H1 (cell line): ENCODE measurements at regions of chr2 and their contacts with region 1.

Region 1: DNA sequence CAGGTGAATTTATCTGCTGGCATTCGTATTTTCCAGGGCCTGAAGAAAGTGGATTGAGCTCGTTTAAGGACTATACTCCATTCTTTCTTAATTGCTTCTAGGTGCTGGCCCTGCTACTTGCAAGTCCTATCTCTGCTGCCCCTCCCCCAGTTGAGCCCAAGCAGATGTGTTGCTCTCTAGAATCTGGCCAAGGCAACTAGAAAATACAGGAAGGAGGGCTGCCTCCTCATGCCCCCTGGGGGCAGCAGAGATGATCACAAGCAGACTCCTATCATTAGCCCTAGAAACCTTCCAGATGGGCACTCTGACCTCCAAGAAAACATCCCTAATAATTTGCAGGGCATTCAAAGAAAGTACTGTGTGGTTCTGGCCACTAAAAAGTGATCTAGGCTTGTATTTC is 72.5 kb upstream of the CYP26B1 start:
- DNase-seq: peak; percentile 67 to 80
- H3K4me3 ChIP-seq: no peak overlapping the region
- H3K27ac ChIP-seq: no peak overlapping the region
- H3K4me1 ChIP-seq: peaks cover 0 to 4% (median 0%) of the 10 kb centered on the region in 4 experiments; a peak in 1 of 7 replicates
- H3K27me3 ChIP-seq: no peaks in the 10 kb centered on the region
- CTCF ChIP-seq: peak; percentile 42 to 74 (median 59)
- EP300 ChIP-seq: peak in 1 of 2 experiments; percentile 50; a peak in 1 of 3 replicates
- POLR2A ChIP-seq: no peak
- RAD21 ChIP-seq: peak; percentile 54 to 68

Region 2: GRCh38 chr2:72208225-72208624 is 11.9 kb before region 1 on chr2:
- CTCF ChIA-PET with region 1: interaction called, 13 read pairs
- POLR2A ChIA-PET with region 1: no interaction called
- DNase-seq: no peak
- H3K4me3 ChIP-seq: no peak overlapping the region
- H3K27ac ChIP-seq: no peak overlapping the region
- H3K4me1 ChIP-seq: no peaks in the 10 kb centered on the region; a peak in 1 of 7 replicates
- H3K27me3 ChIP-seq: no peaks in the 10 kb centered on the region
- CTCF ChIP-seq: no peak
- EP300 ChIP-seq: no peak
- POLR2A ChIP-seq: no peak
- RAD21 ChIP-seq: no peak

Region 3: GRCh38 chr2:72233211-72233610 is 13.0 kb after region 1 on chr2:
- CTCF ChIA-PET with region 1: interaction called, 13 read pairs
- POLR2A ChIA-PET with region 1: no interaction called
- DNase-seq: peak in 1 of 2 experiments; percentile 46
- H3K4me3 ChIP-seq: no peak overlapping the region
- H3K27ac ChIP-seq: no peak overlapping the region
- H3K4me1 ChIP-seq: peaks cover 0 to 3% (median 2%) of the 10 kb centered on the region in 4 experiments; a peak in 3 of 7 replicates
- H3K27me3 ChIP-seq: no peaks in the 10 kb centered on the region
- CTCF ChIP-seq: no peak
- EP300 ChIP-seq: no peak
- POLR2A ChIP-seq: no peak
- RAD21 ChIP-seq: no peak